Ascending aorta (tissue), 2 donors: ENCODE measurements at regions of chr1 and their contacts with region 1.

Region 1: DNA sequence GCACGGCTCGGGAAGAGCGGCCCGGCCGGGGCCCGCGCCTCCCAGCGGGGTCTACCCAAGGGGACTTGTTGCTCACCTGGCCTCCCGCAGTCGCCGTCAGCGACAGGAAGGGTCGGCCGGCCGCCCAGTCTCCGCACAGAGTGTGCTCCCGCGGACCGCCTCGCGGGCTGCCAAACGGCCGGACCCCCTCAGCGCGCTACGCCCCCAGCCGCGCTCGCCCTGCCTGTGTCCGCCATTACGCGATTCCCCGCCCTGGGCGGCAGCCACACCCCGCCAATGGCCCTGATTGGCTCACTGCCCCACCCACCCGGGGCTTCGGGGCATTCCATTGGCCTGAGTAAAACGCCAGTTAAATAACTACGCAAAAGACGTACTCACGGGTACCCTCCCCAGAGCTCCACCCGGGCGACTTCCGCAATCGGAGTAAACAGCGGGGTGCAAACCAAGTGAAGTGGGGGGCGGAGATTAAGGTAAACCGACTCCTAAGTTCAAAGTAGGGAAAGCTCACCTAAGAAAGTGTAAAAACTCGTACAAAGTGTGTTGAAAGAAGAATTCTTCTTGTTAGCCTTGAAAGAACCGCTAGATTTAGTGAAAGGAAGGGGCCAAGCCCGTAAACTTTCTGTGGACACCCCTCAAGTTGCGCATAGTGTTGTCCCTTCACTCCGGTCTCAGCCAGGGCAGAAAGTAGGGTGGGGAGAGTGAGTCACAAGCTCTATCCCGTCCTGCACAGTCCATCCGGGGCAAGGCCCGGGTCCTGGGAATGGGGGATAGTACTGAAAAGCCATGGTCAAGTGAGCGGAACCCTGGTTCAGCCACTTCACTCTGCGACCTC is at the start of gene WASF2:
- DNase-seq: peak; percentile 88 to 99
- H3K4me3 ChIP-seq: peak within 1 kb of the TSS; percentile 71 to 97
- H3K27ac ChIP-seq: peak within 1 kb of the TSS; percentile 92 to 99
- H3K4me1 ChIP-seq: peaks cover 20 to 26% of the 10 kb centered on the region in 2 donors
- H3K27me3 ChIP-seq: no peaks in the 10 kb centered on the region
- CTCF ChIP-seq: no peak
- total RNA-seq, gene WASF2: 70.4 TPM

Region 2: GRCh38 chr1:27383039-27383605 is 107.0 kb before region 1 on chr1 and contains the start of gene CD164L2:
- intact Hi-C with region 1: no loop called
- DNase-seq: no peak
- H3K4me3 ChIP-seq: no peak within 1 kb of the TSS
- H3K27ac ChIP-seq: no peak within 1 kb of the TSS
- H3K4me1 ChIP-seq: no peaks in the 10 kb centered on the region
- H3K27me3 ChIP-seq: no peaks in the 10 kb centered on the region
- CTCF ChIP-seq: no peak
- total RNA-seq, gene CD164L2: not detected

Region 3: DNA sequence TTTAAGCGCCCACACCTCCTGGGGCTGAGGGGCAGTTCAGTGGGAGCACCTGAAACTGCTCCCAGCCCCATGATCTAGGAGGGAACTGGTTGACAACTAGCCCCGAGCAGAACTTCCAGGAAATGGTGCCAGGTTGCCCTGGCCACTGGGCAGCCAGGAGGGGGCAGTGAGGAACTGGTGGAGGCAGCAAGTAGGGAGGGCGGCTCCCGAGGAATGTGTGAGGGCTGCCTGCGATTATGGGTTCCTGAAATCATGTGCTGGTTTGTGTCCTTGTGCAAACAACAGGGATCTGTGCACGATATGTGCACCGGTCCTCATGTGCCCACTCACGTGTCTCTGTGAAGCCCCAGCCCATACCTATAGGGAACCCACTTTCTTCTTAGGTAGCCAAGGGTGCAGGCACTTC is 87.8 kb before region 1 on chr1:
- intact Hi-C with region 1: loop called (anchors 2 kb)
- DNase-seq: peak; percentile 39 to 91
- H3K4me3 ChIP-seq: no peak overlapping the region
- H3K27ac ChIP-seq: peak overlapping the region; percentile 72 to 75
- H3K4me1 ChIP-seq: peaks cover 18 to 34% of the 10 kb centered on the region in 2 donors
- H3K27me3 ChIP-seq: no peaks in the 10 kb centered on the region
- CTCF ChIP-seq: peak; percentile 70 to 80 (median 76)

Region 4: DNA sequence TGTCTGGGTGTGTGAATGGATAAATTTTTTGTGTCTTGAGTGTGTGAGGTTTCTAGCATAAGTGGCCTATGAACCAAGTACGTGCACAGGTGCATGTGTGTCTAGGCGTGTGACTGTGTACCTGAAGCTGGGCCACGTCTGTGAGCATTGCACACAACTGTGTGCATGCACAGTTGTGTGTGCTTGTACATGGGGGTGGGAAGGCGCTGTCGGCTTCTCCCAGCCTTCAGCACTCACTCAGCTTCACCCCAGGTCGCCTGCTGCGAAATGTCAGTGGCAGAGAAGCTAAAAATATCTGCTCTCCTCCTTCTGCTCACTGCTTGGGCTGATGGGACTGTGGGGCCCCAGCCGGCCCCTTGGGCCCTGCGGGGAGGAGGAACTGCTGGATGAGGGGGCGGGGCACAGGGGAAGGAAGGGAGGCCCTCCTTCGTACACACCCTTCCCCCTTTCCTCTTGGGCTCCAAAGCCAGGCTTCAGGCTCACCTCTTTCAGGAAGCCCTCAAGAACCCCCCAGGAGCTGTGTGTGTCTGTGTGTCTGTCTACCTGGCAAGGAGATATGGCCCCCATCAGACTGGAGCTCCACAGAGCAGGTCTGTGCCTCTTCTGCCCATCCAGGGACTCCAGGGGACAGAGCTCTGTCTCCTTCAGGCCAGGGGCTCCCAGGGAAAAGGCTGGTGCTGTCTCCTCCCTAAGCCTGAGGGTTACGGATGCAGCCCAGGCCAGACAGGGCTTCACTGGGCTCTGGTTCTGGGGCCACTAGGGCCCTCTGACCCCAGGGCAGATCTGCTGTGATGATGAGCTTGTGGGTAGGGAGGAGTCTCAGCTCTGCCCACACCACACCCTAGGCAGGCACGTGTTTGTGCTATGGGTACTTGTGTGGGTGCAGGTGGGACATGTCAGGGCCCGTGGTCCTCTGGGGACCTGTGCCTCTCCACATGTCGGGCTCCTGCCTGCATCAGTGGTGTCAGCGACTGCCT is 35.5 kb after region 1 on chr1:
- intact Hi-C with region 1: loop called (anchors 5 kb)
- DNase-seq: peak in 1 of 2 donors; percentile 80
- H3K4me3 ChIP-seq: peak overlapping the region in 1 of 2 donors; percentile 10
- H3K27ac ChIP-seq: peak overlapping the region; percentile 59 to 81
- H3K4me1 ChIP-seq: peaks cover 35 to 58% of the 10 kb centered on the region in 2 donors
- H3K27me3 ChIP-seq: no peaks in the 10 kb centered on the region
- CTCF ChIP-seq: no peak

Region 5: DNA sequence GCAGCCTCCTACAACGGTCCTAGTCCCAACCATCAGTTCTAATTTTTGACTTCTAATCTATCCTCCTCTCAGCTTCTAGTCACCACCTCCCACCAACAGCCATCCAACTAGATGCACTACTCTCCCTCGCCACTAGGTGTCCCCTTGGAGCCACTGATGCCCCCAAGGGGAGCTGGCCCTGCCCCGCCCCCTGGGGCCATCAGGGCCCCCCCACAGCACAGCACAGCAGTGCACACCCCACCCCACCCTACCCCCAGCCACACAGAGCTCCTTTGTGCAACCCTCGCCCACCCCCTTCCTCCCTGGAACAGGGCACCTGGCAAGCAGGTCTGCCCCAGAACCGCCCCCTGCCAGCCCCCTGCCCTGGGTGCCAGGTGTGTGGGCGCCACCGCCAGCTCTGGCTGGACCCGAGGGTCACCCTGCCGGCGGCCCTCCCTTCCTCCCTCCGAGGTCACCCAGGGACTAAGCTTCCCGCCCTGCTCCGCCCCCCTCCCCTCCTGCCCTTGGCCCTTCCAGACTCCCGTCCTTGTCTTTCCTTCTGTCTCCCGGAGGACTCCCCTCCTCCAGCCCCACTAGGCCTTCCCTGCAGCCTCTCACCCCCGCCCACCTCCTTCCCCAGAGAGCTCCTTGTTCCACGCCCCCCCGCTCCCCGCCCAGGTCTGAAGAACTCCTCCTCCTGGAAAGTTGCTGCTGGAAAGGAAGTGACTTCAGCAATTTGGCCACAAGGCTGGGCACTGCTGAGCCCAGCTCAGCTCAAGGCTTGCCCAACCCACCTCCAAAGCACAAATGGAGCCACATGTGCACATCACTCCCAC is 66.9 kb after region 1 on chr1:
- intact Hi-C with region 1: loop called (anchors 1 kb)
- DNase-seq: peak; percentile 85 to 98
- H3K4me3 ChIP-seq: peak overlapping the region in 1 of 2 donors; percentile 51
- H3K27ac ChIP-seq: peak overlapping the region; percentile 89 to 95
- H3K4me1 ChIP-seq: peaks cover 37 to 61% of the 10 kb centered on the region in 2 donors
- H3K27me3 ChIP-seq: no peaks in the 10 kb centered on the region
- CTCF ChIP-seq: peak; percentile 90 to 98 (median 93)

Region 6: GRCh38 chr1:27662707-27663393 is 172.7 kb after region 1 on chr1:
- intact Hi-C with region 1: loop called (anchors 5 kb)
- DNase-seq: peak; percentile 39 to 93
- H3K4me3 ChIP-seq: no peak overlapping the region
- H3K27ac ChIP-seq: peak overlapping the region; percentile 35 to 39
- H3K4me1 ChIP-seq: peaks cover 4 to 20% of the 10 kb centered on the region in 2 donors
- H3K27me3 ChIP-seq: no peaks in the 10 kb centered on the region
- CTCF ChIP-seq: peak; percentile 83 to 97 (median 83)